Ovary (tissue), 10 donors: ENCODE measurements at regions of chr6 and their contacts with region 1.

Region 1: GRCh38 chr6:108751851-108752732 is 96.1 kb upstream of the ARMC2 start:
- DNase-seq: peak; percentile 74 to 88 (median 85)
- H3K4me3 ChIP-seq: no peak overlapping the region
- H3K27ac ChIP-seq: no peak overlapping the region
- H3K4me1 ChIP-seq: peaks cover 27% of the 10 kb centered on the region
- H3K27me3 ChIP-seq: no peaks in the 10 kb centered on the region
- CTCF ChIP-seq: no peak
- EP300 ChIP-seq: no peak
- POLR2A ChIP-seq: no peak

Region 2: GRCh38 chr6:108714766-108715414 is 37.2 kb before region 1 on chr6:
- intact Hi-C with region 1: loop called in 1 of 4 experiments (anchors 5 kb)
- DNase-seq: no peak
- H3K4me3 ChIP-seq: no peak overlapping the region
- H3K27ac ChIP-seq: peak overlapping the region in 1 of 2 donors; percentile 42
- H3K4me1 ChIP-seq: peaks cover 22% of the 10 kb centered on the region
- H3K27me3 ChIP-seq: no peaks in the 10 kb centered on the region
- CTCF ChIP-seq: no peak
- EP300 ChIP-seq: no peak
- POLR2A ChIP-seq: no peak